Right ventricle myocardium inferior (tissue), 1 donor: ENCODE measurements at regions of chr14 and their contacts with region 1.

Region 1: DNA sequence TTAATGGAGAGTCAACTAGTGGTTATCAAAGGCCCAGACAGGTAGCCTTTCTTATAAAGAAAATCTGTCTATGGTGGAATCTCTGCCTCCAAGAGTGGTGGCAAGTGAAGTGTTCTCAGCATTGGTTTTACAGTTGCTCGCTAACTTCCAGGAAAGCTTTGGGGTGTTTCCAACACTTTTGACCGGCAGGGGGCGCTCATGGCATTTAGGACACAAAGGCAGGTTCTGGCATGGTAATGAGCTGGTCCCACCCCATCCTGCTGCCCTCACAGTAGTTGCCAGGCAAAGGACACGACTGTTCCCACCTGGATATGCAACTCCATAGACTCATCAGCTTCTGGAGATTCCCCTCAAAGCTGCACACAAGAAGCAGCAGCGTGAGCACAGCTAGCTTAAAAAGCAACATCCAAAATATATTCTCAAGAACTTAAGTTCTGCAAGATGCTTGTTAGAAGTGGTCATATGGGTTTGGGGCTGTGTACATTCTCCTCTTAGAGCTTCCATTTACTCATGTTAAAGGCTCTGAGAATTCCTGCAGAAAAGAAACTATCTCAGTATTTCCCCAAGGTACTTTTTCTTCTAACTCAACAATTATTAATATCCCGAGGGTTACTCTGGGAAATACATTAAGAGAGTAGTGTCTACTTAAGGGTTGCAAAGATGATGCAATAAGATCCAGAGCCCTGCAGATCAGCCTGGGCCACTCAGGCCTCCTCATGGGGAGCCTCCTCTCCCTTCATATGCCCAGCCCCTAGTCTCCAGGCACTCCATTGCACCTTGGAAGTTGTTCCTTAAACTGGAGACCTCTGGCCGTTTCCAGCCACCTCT is 14.8 kb downstream of the PROX2 start:
- DNase-seq: peak; percentile 94
- ATAC-seq: peak; percentile 82

Region 2: GRCh38 chr14:74161526-74162158 is 699.5 kb before region 1 on chr14:
- intact Hi-C with region 1: no loop called
- DNase-seq: no peak
- ATAC-seq: no peak

Region 3: DNA sequence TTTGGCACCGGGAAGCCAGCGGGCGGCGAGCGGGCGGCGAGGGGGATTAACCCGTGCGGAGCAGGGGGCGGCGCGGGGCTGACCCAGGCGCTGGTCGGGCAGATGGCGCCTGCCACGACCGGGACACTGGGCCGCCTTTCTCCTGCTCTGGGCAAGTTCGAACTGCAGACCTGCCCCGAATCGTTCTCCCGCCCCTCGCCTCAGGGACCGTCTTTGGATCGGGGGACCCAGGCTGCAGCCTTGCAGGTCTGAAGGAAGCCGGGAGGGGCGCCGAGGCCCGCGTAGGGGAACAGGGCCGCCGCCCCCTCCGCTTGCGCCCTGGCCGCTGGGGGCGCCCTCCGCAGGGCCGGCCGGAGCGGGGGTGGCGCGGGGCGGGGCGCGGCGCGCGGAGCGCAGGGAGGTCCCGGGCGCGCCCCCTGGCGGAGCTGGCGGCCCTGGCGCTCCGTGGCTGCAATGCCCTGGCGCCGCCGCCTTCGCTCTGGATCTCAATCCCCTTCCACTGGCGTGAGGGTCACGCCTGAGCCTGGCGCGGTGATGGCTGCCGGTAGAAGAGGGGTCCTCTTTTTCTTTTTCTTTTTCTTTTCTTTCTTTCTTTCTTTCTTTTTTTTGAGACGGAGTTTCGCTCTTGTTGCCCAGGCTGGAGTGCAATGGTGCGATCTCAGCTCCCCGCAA is 248.6 kb before region 1 on chr14:
- intact Hi-C with region 1: no loop called
- DNase-seq: peak; percentile 92
- ATAC-seq: peak; percentile 87

Region 4: DNA sequence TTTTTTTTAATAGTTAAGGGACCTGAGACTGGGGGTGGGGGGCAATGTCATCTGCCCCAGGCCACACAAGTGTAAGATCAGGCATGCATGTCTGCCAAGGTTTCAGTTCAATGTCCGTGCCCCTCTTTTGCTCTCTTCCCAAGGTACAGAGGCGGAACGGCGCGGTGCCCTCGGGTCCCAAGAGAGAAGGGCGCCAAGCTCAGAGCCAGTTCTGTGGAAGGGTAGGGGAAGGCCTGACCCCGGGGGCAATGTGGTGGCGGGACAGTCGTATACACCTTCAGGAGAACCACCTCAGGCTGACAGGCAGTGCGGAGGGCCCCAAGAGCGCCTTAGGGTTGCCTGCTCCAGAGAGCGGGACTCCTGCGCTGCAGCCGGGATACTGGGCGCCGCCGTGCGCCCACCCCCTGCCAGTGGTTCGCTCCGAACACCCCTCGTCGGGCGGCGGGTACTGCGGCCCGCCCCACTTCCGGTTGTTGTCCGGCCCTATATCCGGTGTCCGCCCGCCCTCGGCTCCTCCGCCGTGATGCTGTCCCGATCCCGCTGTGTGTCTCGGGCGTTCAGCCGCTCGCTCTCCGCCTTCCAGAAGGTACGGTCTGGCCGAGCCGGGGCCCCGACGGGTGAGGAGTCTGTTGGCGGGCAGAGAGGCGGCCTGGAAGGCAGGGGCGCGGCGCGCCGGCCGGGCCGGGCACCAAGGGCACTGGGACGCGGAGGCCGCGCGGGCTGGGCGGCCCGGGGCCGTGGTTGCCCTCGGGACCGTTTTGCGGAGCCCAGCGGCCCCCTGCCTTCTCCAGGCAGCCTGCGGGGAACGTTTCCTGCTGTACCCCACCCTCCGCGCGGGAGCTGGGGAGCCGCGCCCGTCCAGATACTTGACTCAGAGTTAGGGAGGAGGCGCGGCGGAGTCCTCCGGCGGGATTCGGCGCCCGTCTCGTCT is 20.6 kb after region 1 on chr14 and contains the start of gene DLST:
- intact Hi-C with region 1: loop called (anchors 2 kb)
- DNase-seq: peak; percentile 95
- ATAC-seq: peak; percentile 99
- total RNA-seq, gene DLST: 213 TPM

Region 5: DNA sequence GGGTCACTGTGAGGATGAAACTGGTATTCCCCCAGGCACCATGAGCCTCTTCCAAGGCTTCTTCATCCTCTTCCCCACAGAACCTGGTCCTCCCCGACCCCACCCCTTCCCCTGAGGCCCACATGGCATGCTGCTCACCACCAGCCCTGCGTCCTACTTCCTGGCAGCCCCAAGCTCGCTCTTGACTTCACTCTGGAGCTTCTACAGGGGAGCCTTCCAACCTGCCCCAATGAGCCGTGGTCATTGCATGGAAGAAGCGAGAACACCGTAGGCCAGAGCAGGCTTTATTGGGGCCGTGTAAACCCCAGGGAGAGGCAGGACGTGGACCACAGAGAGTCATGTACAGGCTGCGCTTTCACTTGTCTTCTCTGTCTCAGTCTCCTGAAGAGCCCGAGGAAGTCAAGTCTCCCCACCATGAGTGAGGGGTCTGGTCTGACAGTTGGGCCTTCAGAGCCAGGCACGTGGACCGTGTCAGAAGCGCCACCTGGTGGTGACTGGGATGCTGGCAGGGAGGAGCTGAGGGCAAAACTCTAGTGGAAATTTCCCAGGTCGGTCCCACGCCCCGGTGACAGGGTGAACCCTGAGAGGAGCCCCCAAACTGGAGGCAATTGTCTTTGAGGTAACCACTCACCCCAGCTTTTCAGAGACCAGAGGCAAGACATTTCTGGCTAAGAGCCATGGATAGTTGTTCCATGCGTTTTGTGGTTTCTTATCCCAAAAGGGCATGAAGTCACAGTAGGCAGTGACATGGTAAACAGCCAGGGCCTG is 44.4 kb after region 1 on chr14:
- intact Hi-C with region 1: loop called (anchors 1 kb)
- DNase-seq: peak; percentile 79
- ATAC-seq: peak; percentile 54

Region 6: DNA sequence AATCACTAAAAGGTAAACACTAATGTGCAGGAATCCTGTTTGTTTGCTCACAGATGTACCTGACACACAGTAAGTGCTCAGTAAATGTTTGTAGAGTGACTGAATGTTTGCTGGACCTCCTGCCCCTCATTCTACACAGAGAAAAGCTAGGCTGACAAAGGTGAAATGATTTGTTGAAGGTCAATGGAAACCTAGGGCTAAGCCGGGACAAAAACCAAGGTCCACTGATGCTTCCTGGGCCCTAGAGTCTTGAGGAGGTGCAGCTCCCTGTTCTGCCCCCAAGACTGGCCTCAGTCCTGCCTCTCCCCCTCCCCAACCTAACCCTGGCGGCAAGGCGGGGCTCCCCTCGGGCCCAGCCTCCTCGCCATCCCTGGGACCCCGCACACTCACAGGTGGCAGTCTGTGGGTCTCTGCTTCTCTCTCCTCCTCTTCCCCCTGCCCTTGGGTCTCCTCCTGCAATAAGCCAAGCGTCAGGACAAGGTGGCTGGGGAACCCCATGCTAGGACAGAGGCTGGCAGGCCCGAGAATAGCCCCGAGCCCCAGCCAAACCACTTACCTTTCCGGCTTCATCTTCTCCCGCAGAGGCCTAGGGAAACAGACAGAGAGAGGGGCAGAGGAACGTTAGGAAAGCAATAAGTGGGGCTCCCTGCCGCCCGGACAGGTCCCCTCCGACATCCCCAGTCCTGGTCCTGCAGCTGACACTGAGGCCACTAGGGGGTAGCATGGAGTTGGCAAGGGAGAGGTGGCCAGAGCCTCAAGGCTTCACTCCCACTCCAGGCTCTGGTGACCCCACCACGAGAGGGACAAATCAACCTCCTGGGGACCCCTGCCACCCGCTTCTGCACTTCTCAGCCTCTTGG is 84.9 kb after region 1 on chr14:
- intact Hi-C with region 1: no loop called
- DNase-seq: peak; percentile 89
- ATAC-seq: peak; percentile 83

Region 7: GRCh38 chr14:75088574-75089373 is 227.7 kb after region 1 on chr14:
- intact Hi-C with region 1: loop called (anchors 2 kb)
- DNase-seq: no peak
- ATAC-seq: peak; percentile 68